ENCODE measurements at regions of chr2 and their contacts with region 1.

Region 1: DNA sequence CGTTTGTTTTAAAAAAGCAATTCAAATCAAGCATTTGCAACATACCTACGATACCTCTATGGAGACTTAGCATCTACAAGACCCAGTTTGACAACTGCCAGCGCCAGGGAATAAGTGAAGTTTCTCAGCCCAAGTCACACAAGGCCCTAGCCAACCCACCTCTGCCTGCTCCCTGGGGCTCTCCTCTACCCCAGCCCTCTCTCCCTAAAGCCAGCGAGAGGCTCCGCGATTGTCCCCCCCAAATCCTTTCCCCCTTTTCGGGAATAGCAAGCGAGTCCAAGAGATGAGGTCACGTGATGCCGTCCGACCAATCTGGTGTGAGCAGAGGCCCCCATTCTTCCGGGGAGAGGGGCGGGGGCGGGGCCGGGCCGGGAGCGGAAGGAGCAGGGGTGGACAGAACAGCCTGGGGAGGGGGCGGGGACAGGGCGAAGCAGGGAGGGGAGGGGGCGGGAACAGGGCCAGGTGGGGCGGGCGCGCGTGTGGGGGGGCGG is 102.1 kb upstream of the RAB6C start:
- DNase-seq: peak; percentile 62 to 93 (median 85)
- ATAC-seq: peak; percentile 95
- H3K4me3 ChIP-seq: peak overlapping the region; percentile 70 to 87
- H3K4me3 Mint-ChIP-seq: peak overlapping the region; percentile 98
- H3K27ac ChIP-seq: peak overlapping the region; percentile 49 to 58
- H3K27ac Mint-ChIP-seq: peak overlapping the region; percentile 95
- H3K4me1 ChIP-seq: peaks cover 11% of the 10 kb centered on the region
- H3K4me1 Mint-ChIP-seq: peaks cover 16% of the 10 kb centered on the region
- H3K27me3 ChIP-seq: no peaks in the 10 kb centered on the region
- H3K27me3 Mint-ChIP-seq: no peaks in the 10 kb centered on the region
- CTCF ChIP-seq: no peak

Region 2: GRCh38 chr2:128321784-128322714 is 1555.3 kb before region 1 on chr2:
- CTCF ChIA-PET with region 1: no interaction called
- POLR2A ChIA-PET with region 1: no interaction called
- intact Hi-C with region 1: loop called (anchors 1 to 5 kb)
- DNase-seq: peak; percentile 66 to 89 (median 80)
- ATAC-seq: peak; percentile 68
- H3K4me3 ChIP-seq: peak overlapping the region; percentile 48 to 76
- H3K4me3 Mint-ChIP-seq: peak overlapping the region; percentile 74
- H3K27ac ChIP-seq: peak overlapping the region in 1 of 2 experiments; percentile 35
- H3K27ac Mint-ChIP-seq: no peak overlapping the region
- H3K4me1 ChIP-seq: peaks cover 15% of the 10 kb centered on the region
- H3K4me1 Mint-ChIP-seq: peaks cover 14% of the 10 kb centered on the region
- H3K27me3 ChIP-seq: peaks cover 0 to 3% of the 10 kb centered on the region in 2 experiments
- H3K27me3 Mint-ChIP-seq: no peaks in the 10 kb centered on the region
- CTCF ChIP-seq: peak; percentile 94

Region 3: GRCh38 chr2:130181325-130181879 is 304.1 kb after region 1 on chr2 and contains the start of gene SMPD4:
- CTCF ChIA-PET with region 1: no interaction called
- POLR2A ChIA-PET with region 1: no interaction called
- intact Hi-C with region 1: loop called in 1 of 2 experiments (anchors 1 kb)
- DNase-seq: peak; percentile 96 to 99 (median 98)
- ATAC-seq: peak; percentile 78
- H3K4me3 ChIP-seq: peak within 1 kb of the TSS; percentile 63 to 86
- H3K4me3 Mint-ChIP-seq: peak within 1 kb of the TSS; percentile 92
- H3K27ac ChIP-seq: peak within 1 kb of the TSS; percentile 81 to 89
- H3K27ac Mint-ChIP-seq: peak within 1 kb of the TSS; percentile 95
- H3K4me1 ChIP-seq: peaks cover 22% of the 10 kb centered on the region
- H3K4me1 Mint-ChIP-seq: peaks cover 27% of the 10 kb centered on the region
- H3K27me3 ChIP-seq: no peaks in the 10 kb centered on the region
- H3K27me3 Mint-ChIP-seq: no peaks in the 10 kb centered on the region
- CTCF ChIP-seq: no peak
- total RNA-seq, gene SMPD4: 108 to 114 TPM

Region 4: GRCh38 chr2:130198343-130198742 is 321.0 kb after region 1 on chr2 and contains the start of gene TUBA3E:
- CTCF ChIA-PET with region 1: no interaction called
- POLR2A ChIA-PET with region 1: no interaction called
- intact Hi-C with region 1: no loop called
- DNase-seq: no peak
- ATAC-seq: no peak
- H3K4me3 ChIP-seq: no peak within 1 kb of the TSS
- H3K4me3 Mint-ChIP-seq: no peak within 1 kb of the TSS
- H3K27ac ChIP-seq: no peak within 1 kb of the TSS
- H3K27ac Mint-ChIP-seq: no peak within 1 kb of the TSS
- H3K4me1 ChIP-seq: no peaks in the 10 kb centered on the region
- H3K4me1 Mint-ChIP-seq: no peaks in the 10 kb centered on the region
- H3K27me3 ChIP-seq: no peaks in the 10 kb centered on the region
- H3K27me3 Mint-ChIP-seq: no peaks in the 10 kb centered on the region
- CTCF ChIP-seq: no peak
- total RNA-seq, gene TUBA3E: not detected

Region 5: DNA sequence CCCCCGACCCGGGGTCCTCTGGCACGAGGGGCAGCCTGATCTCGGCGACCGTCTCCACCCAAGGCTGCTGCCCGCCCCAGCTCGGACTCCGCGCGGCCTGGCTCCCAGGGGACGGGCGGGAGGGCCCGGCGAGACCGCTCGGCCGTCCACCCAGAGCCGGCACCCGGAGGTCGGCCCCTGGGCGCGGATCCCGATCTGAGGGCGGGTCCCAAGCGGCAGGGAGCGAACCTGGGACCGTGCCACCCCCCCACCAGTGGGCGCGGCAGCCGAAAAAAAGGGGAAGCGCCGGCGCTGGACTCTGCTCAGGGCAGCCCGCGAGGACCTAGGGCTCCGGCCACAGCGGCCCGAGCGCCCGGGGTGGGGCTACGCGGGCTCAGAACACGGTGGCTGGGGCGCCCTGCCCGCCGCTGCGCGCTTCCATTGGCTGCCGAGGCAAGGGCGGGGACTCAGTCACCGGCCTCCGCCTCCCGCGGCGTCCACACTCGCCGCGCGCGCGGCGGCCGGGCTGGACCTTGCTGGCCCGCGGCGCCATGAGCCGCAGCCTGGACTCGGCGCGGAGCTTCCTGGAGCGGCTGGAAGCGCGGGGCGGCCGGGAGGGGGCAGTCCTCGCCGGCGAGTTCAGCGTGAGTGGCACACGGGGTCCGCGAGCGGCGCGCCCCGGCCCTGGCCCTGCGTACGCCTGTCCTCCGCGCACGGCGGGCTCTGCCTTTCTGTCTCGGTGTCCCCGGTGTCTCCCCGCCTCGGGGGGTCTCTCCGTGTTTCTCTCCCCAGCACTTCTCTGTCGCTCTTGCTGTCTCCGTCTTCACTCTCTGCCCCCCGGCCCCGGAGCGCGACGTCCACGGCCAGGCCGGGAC is 478.5 kb after region 1 on chr2 and contains the start of gene PTPN18:
- CTCF ChIA-PET with region 1: no interaction called
- POLR2A ChIA-PET with region 1: no interaction called
- intact Hi-C with region 1: loop called in 1 of 2 experiments (anchors 5 kb)
- DNase-seq: peak in 8 of 9 experiments; percentile 44 to 74 (median 58)
- ATAC-seq: peak; percentile 87
- H3K4me3 ChIP-seq: peak within 1 kb of the TSS; percentile 61 to 63
- H3K4me3 Mint-ChIP-seq: peak within 1 kb of the TSS; percentile 85
- H3K27ac ChIP-seq: no peak within 1 kb of the TSS
- H3K27ac Mint-ChIP-seq: no peak within 1 kb of the TSS
- H3K4me1 ChIP-seq: peaks cover 10% of the 10 kb centered on the region
- H3K4me1 Mint-ChIP-seq: peaks cover 12% of the 10 kb centered on the region
- H3K27me3 ChIP-seq: no peaks in the 10 kb centered on the region
- H3K27me3 Mint-ChIP-seq: no peaks in the 10 kb centered on the region
- CTCF ChIP-seq: peak; percentile 29
- total RNA-seq, gene PTPN18: 18.1 to 20.6 TPM

Region 6: GRCh38 chr2:131492418-131493198 is 1615.3 kb after region 1 on chr2:
- CTCF ChIA-PET with region 1: no interaction called
- POLR2A ChIA-PET with region 1: no interaction called
- intact Hi-C with region 1: loop called in 1 of 2 experiments (anchors 5 kb)
- DNase-seq: peak; percentile 86 to 98 (median 93)
- ATAC-seq: peak; percentile 73
- H3K4me3 ChIP-seq: peak overlapping the region; percentile 86 to 87
- H3K4me3 Mint-ChIP-seq: peak overlapping the region; percentile 95
- H3K27ac ChIP-seq: peak overlapping the region; percentile 95 to 97
- H3K27ac Mint-ChIP-seq: peak overlapping the region; percentile 98
- H3K4me1 ChIP-seq: peaks cover 19% of the 10 kb centered on the region
- H3K4me1 Mint-ChIP-seq: peaks cover 49% of the 10 kb centered on the region
- H3K27me3 ChIP-seq: no peaks in the 10 kb centered on the region
- H3K27me3 Mint-ChIP-seq: no peaks in the 10 kb centered on the region
- CTCF ChIP-seq: peak; percentile 88

Measured in CD8-positive, alpha-beta T cell (primary cell).